ENCODE measurements at regions of chr1 and their contacts with region 1.

Region 1: DNA sequence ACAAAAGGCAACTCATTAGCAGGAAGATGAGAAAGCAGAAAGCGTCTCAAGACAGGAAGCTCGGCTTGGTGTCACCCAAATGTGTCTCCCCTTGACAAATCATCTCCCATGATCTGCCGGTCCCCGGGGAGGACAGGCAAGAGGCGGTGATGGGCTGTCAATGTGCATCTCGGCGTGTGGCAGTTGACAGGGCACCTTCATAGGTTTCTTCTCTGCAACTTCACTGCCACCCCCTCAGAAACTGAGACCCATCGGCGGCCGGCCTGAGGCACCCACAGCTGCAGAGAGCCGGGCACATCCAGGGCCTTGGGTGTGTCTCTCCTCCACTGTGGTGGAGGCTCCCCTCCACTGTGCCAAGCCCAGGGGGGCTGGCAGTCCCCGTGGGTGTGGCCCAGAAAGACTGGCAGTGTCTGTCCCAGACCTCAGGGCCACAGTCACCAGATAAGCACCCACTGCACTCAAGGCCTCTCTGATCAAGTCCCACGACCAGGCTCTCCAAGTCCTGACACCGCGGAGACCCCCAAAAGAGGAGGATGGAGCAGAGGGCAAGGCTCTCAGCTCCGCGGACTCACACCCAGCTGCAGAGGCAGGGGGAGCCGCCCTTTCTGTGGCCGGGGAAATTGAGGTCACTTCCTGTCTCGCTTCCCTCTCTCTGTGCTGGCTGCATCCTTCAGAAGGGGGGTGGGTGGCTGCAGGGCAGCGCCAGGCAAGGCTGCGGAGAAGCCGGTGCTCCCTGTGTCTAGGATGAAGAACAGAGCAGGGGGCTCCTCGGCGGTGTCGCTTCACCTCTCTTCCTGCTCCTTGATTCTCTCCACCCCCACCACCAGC is 39.6 kb upstream of the LBR start:
- DNase-seq: peak; percentile 96
- H3K4me3 ChIP-seq: peak overlapping the region; percentile 74
- H3K27ac ChIP-seq: peak overlapping the region; percentile 95
- H3K4me1 ChIP-seq: peaks cover 47% of the 10 kb centered on the region
- CTCF ChIP-seq: peak; percentile 17; the same call in 1 of the 2 replicates

Region 2: DNA sequence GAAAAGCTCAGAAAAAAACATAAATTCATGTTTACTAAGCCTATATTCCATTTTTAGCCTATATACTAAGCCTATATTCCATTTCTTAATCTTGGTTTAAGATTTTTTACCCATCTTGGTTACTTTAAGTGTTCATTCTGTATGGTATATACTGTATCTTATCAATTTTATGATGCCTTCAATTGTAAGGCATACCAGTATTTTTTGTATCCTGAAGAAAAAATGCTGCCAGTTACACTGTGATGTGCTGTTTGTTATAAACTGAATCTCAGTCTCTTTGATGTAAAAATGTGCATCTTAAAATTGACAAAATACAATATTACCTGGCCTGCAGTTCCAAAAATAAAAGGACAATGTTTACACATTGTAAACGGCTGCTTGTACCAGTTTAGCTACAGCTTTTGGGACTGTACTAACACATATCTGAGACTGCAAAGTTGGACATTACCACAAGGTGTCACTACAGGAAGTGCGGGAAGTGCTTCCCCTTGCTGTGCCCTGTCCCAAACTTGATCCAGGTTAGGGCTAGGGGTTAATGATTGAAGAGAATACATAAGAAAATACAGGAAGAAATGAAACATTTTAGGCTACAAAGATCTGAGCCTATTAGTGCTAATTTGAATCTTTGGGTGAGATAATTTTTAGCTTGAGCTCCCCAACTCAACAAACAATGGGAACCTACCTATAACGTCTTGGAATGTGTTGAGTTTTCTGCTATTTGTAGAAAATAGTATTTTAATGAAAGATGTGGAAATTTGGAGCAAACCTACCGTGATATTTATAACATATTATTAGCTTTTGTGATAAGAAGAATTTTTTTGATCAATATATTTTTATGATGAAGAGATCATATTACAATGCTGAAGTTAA is 148.5 kb before region 1 on chr1:
- CTCF ChIA-PET with region 1: no interaction called
- POLR2A ChIA-PET with region 1: interaction called, 3 read pairs
- intact Hi-C with region 1: loop called (anchors 2 kb)
- DNase-seq: peak; percentile 66
- H3K4me3 ChIP-seq: no peak overlapping the region
- H3K27ac ChIP-seq: no peak overlapping the region
- H3K4me1 ChIP-seq: no peaks in the 10 kb centered on the region
- CTCF ChIP-seq: peak; percentile 94

Region 3: GRCh38 chr1:225343624-225344023 is 123.8 kb before region 1 on chr1:
- CTCF ChIA-PET with region 1: no interaction called
- POLR2A ChIA-PET with region 1: no interaction called
- intact Hi-C with region 1: no loop called
- DNase-seq: peak; percentile 37
- H3K4me3 ChIP-seq: no peak overlapping the region
- H3K27ac ChIP-seq: no peak overlapping the region
- H3K4me1 ChIP-seq: peaks cover 3% of the 10 kb centered on the region
- CTCF ChIP-seq: peak; percentile 81

Region 4: GRCh38 chr1:225447650-225448089 is 19.7 kb before region 1 on chr1:
- CTCF ChIA-PET with region 1: interaction called, 5 read pairs
- POLR2A ChIA-PET with region 1: interaction called, 49 read pairs
- intact Hi-C with region 1: loop called (anchors 1 kb)
- DNase-seq: no peak
- H3K4me3 ChIP-seq: no peak overlapping the region
- H3K27ac ChIP-seq: no peak overlapping the region
- H3K4me1 ChIP-seq: peaks cover 50% of the 10 kb centered on the region
- CTCF ChIP-seq: no peak

Region 5: DNA sequence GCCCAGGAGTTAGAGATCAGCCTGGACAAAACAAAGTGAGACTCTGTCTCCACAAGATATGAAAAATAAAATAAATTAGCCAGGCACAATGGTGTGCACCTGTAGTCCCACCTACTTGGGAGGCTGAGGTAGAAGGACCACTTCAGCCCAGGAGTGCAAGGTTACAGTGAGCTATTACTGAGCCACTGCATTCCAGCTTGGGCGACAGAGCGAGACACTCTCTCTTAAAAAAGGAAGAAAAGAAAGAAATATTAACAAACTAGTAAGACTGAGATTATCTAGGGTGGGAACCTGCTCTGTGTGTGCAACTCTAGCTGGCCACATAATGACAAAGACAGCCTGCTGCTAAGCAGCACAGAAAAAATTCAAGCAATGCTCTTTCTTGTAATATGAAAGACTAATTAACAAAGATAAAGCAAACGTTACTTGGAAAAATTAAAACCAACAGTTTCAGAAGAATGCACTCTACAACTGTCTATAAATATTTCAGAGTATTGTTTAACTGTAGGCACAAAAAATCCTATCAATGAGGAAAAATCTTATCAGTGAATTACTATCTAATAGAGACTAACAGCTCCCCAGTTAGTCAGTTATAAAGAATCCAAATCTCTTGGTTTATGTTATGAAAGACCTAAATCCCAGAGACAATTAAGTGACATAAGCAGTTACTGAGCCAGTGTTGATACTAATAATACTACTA is 111.0 kb after region 1 on chr1:
- CTCF ChIA-PET with region 1: no interaction called
- POLR2A ChIA-PET with region 1: interaction called, 10 read pairs
- intact Hi-C with region 1: no loop called
- DNase-seq: no peak
- H3K4me3 ChIP-seq: no peak overlapping the region
- H3K27ac ChIP-seq: no peak overlapping the region
- H3K4me1 ChIP-seq: peaks cover 24% of the 10 kb centered on the region
- CTCF ChIP-seq: no peak

Region 6: DNA sequence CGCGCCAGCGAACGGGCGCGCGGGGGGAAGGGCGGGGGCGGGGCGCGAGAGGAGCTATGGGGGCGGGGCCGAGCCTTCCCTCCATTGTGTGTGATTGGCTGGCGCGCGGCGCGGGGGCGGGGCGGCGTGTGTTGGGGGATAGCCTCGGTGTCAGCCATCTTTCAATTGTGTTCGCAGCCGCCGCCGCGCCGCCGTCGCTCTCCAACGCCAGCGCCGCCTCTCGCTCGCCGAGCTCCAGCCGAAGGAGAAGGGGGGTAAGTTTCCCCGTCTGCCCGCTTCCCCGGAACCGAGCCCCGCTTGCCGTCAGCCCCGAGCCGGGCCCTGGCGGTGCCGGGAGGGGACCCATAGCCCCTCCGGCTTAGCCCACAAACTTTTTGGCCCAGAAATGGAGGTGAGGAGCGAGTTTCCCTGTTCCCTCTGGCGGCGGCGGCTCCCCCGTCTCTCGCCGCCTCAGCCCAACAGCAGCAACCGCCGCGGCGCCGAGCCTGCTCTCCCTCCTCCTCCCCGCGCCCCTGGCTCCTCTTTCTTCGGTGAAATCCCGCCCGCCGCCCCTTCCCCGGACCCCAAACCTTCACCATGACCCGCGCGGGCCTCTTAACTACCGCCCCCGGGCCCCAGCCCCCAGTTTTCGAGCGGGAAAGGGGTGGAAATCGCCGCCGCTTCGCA is 595.3 kb after region 1 on chr1 and contains the start of gene H3-3A:
- CTCF ChIA-PET with region 1: no interaction called
- POLR2A ChIA-PET with region 1: no interaction called
- intact Hi-C with region 1: loop called (anchors 5 kb)
- DNase-seq: peak; percentile 96
- H3K4me3 ChIP-seq: peak within 1 kb of the TSS; percentile 89
- H3K27ac ChIP-seq: peak within 1 kb of the TSS; percentile 92
- H3K4me1 ChIP-seq: peaks cover 33% of the 10 kb centered on the region
- CTCF ChIP-seq: 0 out of 2 replicates have a peak, but pooled peaks have one; percentile 22
- total RNA-seq, gene H3-3A: 365 and 416 TPM in 2 replicates

Measured in OCI-LY7 (cell line).